ENCODE measurements at regions of chr2 and their contacts with region 1.

Region 1: GRCh38 chr2:176079831-176080539 is 3.8 kb downstream of the EVX2 start:
- DNase-seq: peak; percentile 95
- H3K4me3 ChIP-seq: peak overlapping the region; percentile 39 to 52
- H3K27ac ChIP-seq: no peak overlapping the region
- H3K4me1 ChIP-seq: peaks cover 0 to 23% of the 10 kb centered on the region in 2 experiments; a peak in 1 of 4 replicates
- H3K27me3 ChIP-seq: peaks cover 70% of the 10 kb centered on the region
- CTCF ChIP-seq: peak; percentile 87
- EP300 ChIP-seq: no peak
- RAD21 ChIP-seq: peak; percentile 63

Region 2: DNA sequence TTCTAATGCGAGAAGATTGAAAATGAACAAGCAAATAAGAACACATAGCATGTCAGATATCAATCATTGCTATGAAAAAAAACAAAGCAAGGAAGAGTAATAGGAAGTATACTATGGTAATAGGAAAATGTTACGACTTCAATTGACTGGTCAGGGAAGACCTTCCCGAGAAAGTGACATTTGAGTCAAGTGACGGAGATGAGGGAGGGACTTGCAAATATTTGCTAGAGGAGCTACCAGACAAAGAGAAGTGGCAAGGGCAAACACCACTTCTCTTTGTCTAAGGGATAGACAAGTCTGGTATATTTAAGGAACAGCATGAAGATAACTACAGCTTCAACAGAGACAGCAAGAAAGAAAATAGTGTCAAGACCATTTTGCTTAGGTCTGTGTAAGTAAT is 17.8 kb before region 1 on chr2:
- CTCF ChIA-PET with region 1: interaction called, 10 read pairs
- POLR2A ChIA-PET with region 1: no interaction called
- DNase-seq: no peak
- H3K4me3 ChIP-seq: no peak overlapping the region
- H3K27ac ChIP-seq: no peak overlapping the region
- H3K4me1 ChIP-seq: no peaks in the 10 kb centered on the region
- H3K27me3 ChIP-seq: no peaks in the 10 kb centered on the region; the same call in 1 of the 2 replicates
- CTCF ChIP-seq: no peak
- EP300 ChIP-seq: no peak
- RAD21 ChIP-seq: no peak

Region 3: GRCh38 chr2:176110975-176111663 is 31.1 kb after region 1 on chr2:
- CTCF ChIA-PET with region 1: interaction called, 22 read pairs
- POLR2A ChIA-PET with region 1: no interaction called
- DNase-seq: peak; percentile 88
- H3K4me3 ChIP-seq: peak overlapping the region in 1 of 2 experiments; percentile 19; a peak in 1 of 4 replicates
- H3K27ac ChIP-seq: no peak overlapping the region
- H3K4me1 ChIP-seq: peaks cover 0 to 4% of the 10 kb centered on the region in 2 experiments; a peak in 2 of 4 replicates
- H3K27me3 ChIP-seq: peaks cover 70% of the 10 kb centered on the region
- CTCF ChIP-seq: peak; percentile 90
- EP300 ChIP-seq: no peak
- RAD21 ChIP-seq: peak; percentile 65

Region 4: GRCh38 chr2:176130147-176130956 is 50.4 kb after region 1 on chr2:
- CTCF ChIA-PET with region 1: no interaction called
- POLR2A ChIA-PET with region 1: no interaction called
- DNase-seq: peak; percentile 80
- H3K4me3 ChIP-seq: peak overlapping the region; percentile 69
- H3K27ac ChIP-seq: peak overlapping the region; percentile 62 to 63
- H3K4me1 ChIP-seq: peaks cover 30 to 38% of the 10 kb centered on the region in 2 experiments
- H3K27me3 ChIP-seq: no peaks in the 10 kb centered on the region
- CTCF ChIP-seq: 0 out of 2 replicates have a peak, but pooled peaks have one; percentile 17
- EP300 ChIP-seq: 0 out of 4 replicates have a peak, but pooled peaks of 1 of the 2 experiments have one; percentile 5
- RAD21 ChIP-seq: no peak

Region 5: GRCh38 chr2:176619504-176619903 is 539.5 kb after region 1 on chr2:
- CTCF ChIA-PET with region 1: no interaction called
- POLR2A ChIA-PET with region 1: no interaction called
- DNase-seq: no peak
- H3K4me3 ChIP-seq: no peak overlapping the region
- H3K27ac ChIP-seq: no peak overlapping the region
- H3K4me1 ChIP-seq: peaks cover 5 to 6% of the 10 kb centered on the region in 2 experiments; a peak in 3 of 4 replicates
- H3K27me3 ChIP-seq: no peaks in the 10 kb centered on the region
- CTCF ChIP-seq: no peak
- EP300 ChIP-seq: no peak
- RAD21 ChIP-seq: no peak

Measured in SK-N-SH (cell line).